ENCODE measurements at regions of chr6 and their contacts with region 1.

Region 1: GRCh38 chr6:113936093-113936934 is 34.6 kb downstream of the HDAC2 start:
- DNase-seq: peak; percentile 24
- ATAC-seq: peak; percentile 92
- H3K4me3 ChIP-seq: no peak overlapping the region
- H3K27ac ChIP-seq: no peak overlapping the region
- H3K4me1 ChIP-seq: no peaks in the 10 kb centered on the region
- H3K27me3 ChIP-seq: no peaks in the 10 kb centered on the region
- CTCF ChIP-seq: peak; percentile 59 to 77 (median 69)
- EP300 ChIP-seq: no peak
- POLR2A ChIP-seq: no peak
- RAD21 ChIP-seq: peak; percentile 57

Region 2: GRCh38 chr6:112780498-112781096 is 1155.7 kb before region 1 on chr6:
- CTCF ChIA-PET with region 1: interaction called, 10 read pairs
- POLR2A ChIA-PET with region 1: no interaction called
- RAD21 ChIA-PET with region 1: no interaction called
- SMC1A ChIA-PET with region 1: no interaction called
- in situ Hi-C with region 1: no loop called
- intact Hi-C with region 1: no loop called
- DNase-seq: peak; percentile 24
- ATAC-seq: peak; percentile 99
- H3K4me3 ChIP-seq: no peak overlapping the region
- H3K27ac ChIP-seq: no peak overlapping the region
- H3K4me1 ChIP-seq: no peaks in the 10 kb centered on the region
- H3K27me3 ChIP-seq: no peaks in the 10 kb centered on the region
- CTCF ChIP-seq: peak; percentile 67 to 82 (median 69)
- EP300 ChIP-seq: no peak
- POLR2A ChIP-seq: no peak
- RAD21 ChIP-seq: peak; percentile 95

Region 3: DNA sequence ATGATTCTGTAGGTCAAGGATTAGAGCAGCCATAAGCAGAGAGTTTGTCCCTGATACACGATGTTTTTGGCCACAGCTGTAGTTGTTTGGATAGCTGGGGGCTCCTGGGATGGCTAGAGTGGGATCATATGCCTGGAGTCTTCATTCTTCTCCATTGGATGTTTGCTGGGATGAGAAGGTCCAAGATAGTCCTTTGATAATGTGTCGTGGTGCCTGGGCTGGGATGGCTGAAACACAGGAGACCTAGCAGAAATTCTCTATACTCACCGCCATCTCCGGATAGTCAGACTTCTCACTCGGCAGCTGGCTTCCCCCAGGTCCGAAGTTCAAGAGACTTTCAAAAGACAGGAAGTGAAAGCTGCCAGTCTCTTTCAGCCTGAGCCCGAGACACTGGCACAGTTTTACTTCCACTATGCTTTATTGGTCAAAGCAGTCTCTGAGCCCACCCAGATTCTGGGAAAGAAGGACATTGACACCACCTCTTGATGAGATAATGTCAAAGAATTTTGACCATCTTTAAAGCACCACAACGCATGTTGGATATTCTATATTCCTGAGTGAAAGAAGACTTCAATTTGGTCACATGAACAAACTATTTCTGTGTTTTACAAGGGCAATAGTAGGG is 63.2 kb before region 1 on chr6:
- CTCF ChIA-PET with region 1: no interaction called
- POLR2A ChIA-PET with region 1: no interaction called
- RAD21 ChIA-PET with region 1: no interaction called
- SMC1A ChIA-PET with region 1: no interaction called
- in situ Hi-C with region 1: no loop called
- intact Hi-C with region 1: no loop called
- DNase-seq: no peak
- ATAC-seq: peak; percentile 89
- H3K4me3 ChIP-seq: peak overlapping the region; percentile 65
- H3K27ac ChIP-seq: no peak overlapping the region; the same call in 1 of the 2 replicates
- H3K4me1 ChIP-seq: peaks cover 7% of the 10 kb centered on the region
- H3K27me3 ChIP-seq: no peaks in the 10 kb centered on the region
- CTCF ChIP-seq: peak in 1 of 3 experiments; percentile 17; a peak in 2 of 6 replicates
- EP300 ChIP-seq: peak; percentile 48 to 67; a peak in 2 of 4 replicates
- POLR2A ChIP-seq: no peak
- RAD21 ChIP-seq: 0 out of 2 replicates have a peak, but pooled peaks have one; percentile 21

Region 4: GRCh38 chr6:113920663-113921267 is 15.5 kb before region 1 on chr6:
- CTCF ChIA-PET with region 1: interaction called, 22 read pairs
- POLR2A ChIA-PET with region 1: no interaction called
- RAD21 ChIA-PET with region 1: no interaction called
- SMC1A ChIA-PET with region 1: interaction called, 5 read pairs
- in situ Hi-C with region 1: no loop called
- intact Hi-C with region 1: no loop called
- DNase-seq: no peak
- ATAC-seq: peak; percentile 78
- H3K4me3 ChIP-seq: no peak overlapping the region
- H3K27ac ChIP-seq: no peak overlapping the region
- H3K4me1 ChIP-seq: peaks cover 3% of the 10 kb centered on the region; the same call in 1 of the 2 replicates
- H3K27me3 ChIP-seq: no peaks in the 10 kb centered on the region
- CTCF ChIP-seq: no peak
- EP300 ChIP-seq: no peak
- POLR2A ChIP-seq: no peak
- RAD21 ChIP-seq: no peak

Region 5: DNA sequence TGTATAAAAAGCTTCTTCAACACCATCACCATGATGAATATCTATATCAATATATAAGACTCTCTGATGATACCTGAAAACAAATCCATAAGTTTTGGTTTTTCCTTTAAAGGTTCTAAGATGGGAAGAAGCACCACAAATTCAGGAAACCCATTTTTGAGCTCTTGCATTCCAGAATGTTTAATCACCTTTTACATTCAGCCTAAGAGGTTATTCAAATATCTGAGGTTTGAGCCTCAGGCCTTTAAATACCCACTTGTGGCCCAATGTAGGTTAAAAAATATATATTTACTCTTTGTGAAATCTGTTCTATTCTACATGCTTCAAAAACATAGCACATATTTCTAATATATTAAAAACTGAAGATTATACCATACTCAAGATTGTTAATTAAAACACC is 17.0 kb after region 1 on chr6:
- CTCF ChIA-PET with region 1: interaction called, 25 read pairs
- POLR2A ChIA-PET with region 1: no interaction called
- RAD21 ChIA-PET with region 1: no interaction called
- SMC1A ChIA-PET with region 1: interaction called, 7 read pairs
- in situ Hi-C with region 1: no loop called
- intact Hi-C with region 1: no loop called
- DNase-seq: no peak
- ATAC-seq: no peak
- H3K4me3 ChIP-seq: no peak overlapping the region
- H3K27ac ChIP-seq: no peak overlapping the region
- H3K4me1 ChIP-seq: no peaks in the 10 kb centered on the region
- H3K27me3 ChIP-seq: no peaks in the 10 kb centered on the region
- CTCF ChIP-seq: no peak
- EP300 ChIP-seq: no peak
- POLR2A ChIP-seq: no peak
- RAD21 ChIP-seq: no peak

Region 6: GRCh38 chr6:113960795-113961194 is 24.5 kb after region 1 on chr6:
- CTCF ChIA-PET with region 1: interaction called, 25 read pairs
- POLR2A ChIA-PET with region 1: no interaction called
- RAD21 ChIA-PET with region 1: no interaction called
- SMC1A ChIA-PET with region 1: no interaction called
- in situ Hi-C with region 1: no loop called
- intact Hi-C with region 1: no loop called
- DNase-seq: no peak
- ATAC-seq: peak; percentile 65
- H3K4me3 ChIP-seq: no peak overlapping the region
- H3K27ac ChIP-seq: no peak overlapping the region
- H3K4me1 ChIP-seq: no peaks in the 10 kb centered on the region
- H3K27me3 ChIP-seq: no peaks in the 10 kb centered on the region
- CTCF ChIP-seq: no peak
- EP300 ChIP-seq: no peak
- POLR2A ChIP-seq: no peak
- RAD21 ChIP-seq: no peak